ENCODE measurements at regions of chr3 and their contacts with region 1.

Region 1: GRCh38 chr3:124995460-124995994 is 60.3 kb downstream of the HEG1 start:
- DNase-seq: peak; percentile 20
- ATAC-seq: peak; percentile 96
- H3K4me3 ChIP-seq: no peak overlapping the region
- H3K27ac ChIP-seq: peak overlapping the region; percentile 38
- H3K4me1 ChIP-seq: peaks cover 5% of the 10 kb centered on the region
- H3K27me3 ChIP-seq: no peaks in the 10 kb centered on the region
- CTCF ChIP-seq: peak; percentile 66 to 92 (median 75); a peak in 4 of 6 replicates
- EP300 ChIP-seq: no peak
- POLR2A ChIP-seq: no peak
- RAD21 ChIP-seq: peak; percentile 91

Region 2: GRCh38 chr3:124688581-124689454 is 306.7 kb before region 1 on chr3:
- CTCF ChIA-PET with region 1: no interaction called
- POLR2A ChIA-PET with region 1: no interaction called
- RAD21 ChIA-PET with region 1: no interaction called
- SMC1A ChIA-PET with region 1: no interaction called
- in situ Hi-C with region 1: no loop called
- intact Hi-C with region 1: no loop called
- DNase-seq: peak; percentile 30
- ATAC-seq: peak; percentile 94
- H3K4me3 ChIP-seq: no peak overlapping the region
- H3K27ac ChIP-seq: no peak overlapping the region
- H3K4me1 ChIP-seq: no peaks in the 10 kb centered on the region
- H3K27me3 ChIP-seq: no peaks in the 10 kb centered on the region
- CTCF ChIP-seq: peak; percentile 75 to 95 (median 79); a peak in 5 of 6 replicates
- EP300 ChIP-seq: no peak
- POLR2A ChIP-seq: no peak
- RAD21 ChIP-seq: peak; percentile 91

Region 3: DNA sequence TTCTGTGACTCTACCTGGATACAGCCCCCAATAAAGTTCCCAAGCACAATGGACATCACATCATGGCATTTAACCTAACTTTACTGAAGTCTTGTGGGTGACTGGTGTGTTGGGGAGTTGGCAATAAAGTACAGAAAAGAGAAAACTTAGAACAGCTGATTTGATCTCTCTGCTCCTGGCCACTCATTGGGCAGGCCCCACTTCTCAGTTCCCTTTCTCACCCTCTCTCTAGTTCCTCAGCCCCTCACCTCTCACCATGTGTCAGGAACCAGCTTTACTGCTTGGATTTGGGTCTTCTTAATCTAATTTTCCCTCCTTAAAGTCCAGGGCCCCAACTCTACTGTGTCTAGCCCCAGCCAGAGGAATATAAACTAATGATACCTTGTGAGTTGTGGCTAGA is 60.3 kb before region 1 on chr3:
- CTCF ChIA-PET with region 1: interaction called, 10 read pairs
- POLR2A ChIA-PET with region 1: no interaction called
- RAD21 ChIA-PET with region 1: interaction called, 7 read pairs
- SMC1A ChIA-PET with region 1: interaction called, 19 read pairs
- in situ Hi-C with region 1: no loop called
- intact Hi-C with region 1: no loop called
- DNase-seq: no peak
- ATAC-seq: peak; percentile 89
- H3K4me3 ChIP-seq: no peak overlapping the region
- H3K27ac ChIP-seq: no peak overlapping the region
- H3K4me1 ChIP-seq: no peaks in the 10 kb centered on the region
- H3K27me3 ChIP-seq: no peaks in the 10 kb centered on the region; a peak in 1 of 4 replicates
- CTCF ChIP-seq: no peak
- EP300 ChIP-seq: no peak
- POLR2A ChIP-seq: no peak
- RAD21 ChIP-seq: no peak

Region 4: DNA sequence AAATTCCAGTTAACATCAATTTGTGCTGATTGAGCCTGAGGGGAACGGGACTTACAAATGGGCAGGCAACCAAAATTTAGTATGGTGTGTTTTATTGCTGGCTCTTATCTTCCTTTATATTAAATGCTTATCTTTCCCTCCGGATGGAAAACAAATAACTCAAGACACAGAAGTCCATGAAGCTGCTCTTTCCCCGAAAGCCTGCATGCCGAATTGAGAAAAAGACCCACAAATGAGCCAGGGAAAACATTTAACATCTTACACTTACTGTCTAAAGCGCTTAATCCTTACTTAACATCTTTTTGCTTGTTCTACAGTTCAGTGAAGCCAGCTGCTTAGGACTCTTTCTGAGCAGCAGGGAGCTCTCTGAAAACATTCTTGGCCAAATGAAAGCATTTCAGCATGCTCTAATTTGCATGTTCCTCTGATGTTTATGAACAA is 10.8 kb after region 1 on chr3:
- CTCF ChIA-PET with region 1: interaction called, 6 read pairs
- POLR2A ChIA-PET with region 1: no interaction called
- RAD21 ChIA-PET with region 1: interaction called, 3 read pairs
- SMC1A ChIA-PET with region 1: interaction called, 14 read pairs
- in situ Hi-C with region 1: no loop called
- intact Hi-C with region 1: no loop called
- DNase-seq: no peak
- ATAC-seq: no peak
- H3K4me3 ChIP-seq: no peak overlapping the region
- H3K27ac ChIP-seq: no peak overlapping the region
- H3K4me1 ChIP-seq: no peaks in the 10 kb centered on the region
- H3K27me3 ChIP-seq: no peaks in the 10 kb centered on the region
- CTCF ChIP-seq: no peak
- EP300 ChIP-seq: no peak
- POLR2A ChIP-seq: no peak
- RAD21 ChIP-seq: no peak

Region 5: DNA sequence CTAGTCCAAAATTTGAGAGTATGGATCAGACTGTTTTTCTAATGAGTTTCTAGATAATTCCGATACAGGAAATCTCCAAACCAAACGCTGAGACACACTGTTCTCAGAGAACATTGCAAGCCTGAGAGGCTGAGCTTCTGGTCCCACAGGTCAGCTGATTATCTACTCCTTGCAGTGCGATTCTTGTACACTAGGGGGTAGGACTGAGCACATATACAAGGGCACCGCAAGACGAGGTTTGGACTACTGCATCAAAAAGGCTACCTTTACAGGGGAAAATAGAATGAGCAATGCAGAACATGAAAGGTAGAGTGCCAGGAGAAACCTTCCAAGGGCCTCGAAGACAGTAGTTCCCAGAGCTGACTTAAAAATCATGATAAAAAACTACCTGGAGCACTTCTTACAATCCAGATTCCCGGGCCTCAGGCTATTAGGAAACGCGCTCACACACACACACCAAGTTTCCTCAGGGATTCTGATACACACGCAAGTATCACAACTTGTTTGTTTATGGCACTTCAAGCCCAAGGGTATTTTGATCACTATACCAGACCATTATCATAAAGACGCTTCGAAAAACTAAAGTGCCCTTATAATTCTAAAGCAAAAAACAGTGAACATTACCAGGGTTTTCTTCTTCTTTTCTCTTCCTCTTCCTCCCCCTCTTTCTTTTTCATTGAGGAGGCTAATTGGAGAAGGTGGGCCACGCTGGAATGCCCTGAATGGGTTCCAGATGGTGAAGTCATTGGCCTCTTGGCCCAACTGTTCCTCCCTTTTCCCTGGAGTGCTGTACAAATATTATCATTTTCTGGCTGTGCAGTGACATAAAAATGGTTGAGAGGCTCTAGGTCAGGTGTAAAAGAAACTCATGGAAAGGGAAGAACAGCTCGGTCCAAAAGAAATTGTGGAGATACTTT is 155.3 kb after region 1 on chr3:
- CTCF ChIA-PET with region 1: interaction called, 10 read pairs
- POLR2A ChIA-PET with region 1: no interaction called
- RAD21 ChIA-PET with region 1: no interaction called
- SMC1A ChIA-PET with region 1: interaction called, 3 read pairs
- in situ Hi-C with region 1: no loop called
- intact Hi-C with region 1: loop called (anchors 1 kb)
- DNase-seq: no peak
- ATAC-seq: peak; percentile 57
- H3K4me3 ChIP-seq: no peak overlapping the region
- H3K27ac ChIP-seq: no peak overlapping the region
- H3K4me1 ChIP-seq: peaks cover 55% of the 10 kb centered on the region
- H3K27me3 ChIP-seq: no peaks in the 10 kb centered on the region
- CTCF ChIP-seq: peak; percentile 49 to 80 (median 70)
- EP300 ChIP-seq: no peak
- POLR2A ChIP-seq: no peak
- RAD21 ChIP-seq: peak; percentile 70

Region 6: GRCh38 chr3:125165189-125165947 is 169.8 kb after region 1 on chr3:
- CTCF ChIA-PET with region 1: interaction called, 12 read pairs
- POLR2A ChIA-PET with region 1: no interaction called
- RAD21 ChIA-PET with region 1: interaction called, 5 read pairs
- SMC1A ChIA-PET with region 1: interaction called, 15 read pairs
- in situ Hi-C with region 1: no loop called
- intact Hi-C with region 1: no loop called
- DNase-seq: no peak
- ATAC-seq: peak; percentile 78
- H3K4me3 ChIP-seq: no peak overlapping the region
- H3K27ac ChIP-seq: no peak overlapping the region
- H3K4me1 ChIP-seq: peaks cover 17% of the 10 kb centered on the region
- H3K27me3 ChIP-seq: no peaks in the 10 kb centered on the region
- CTCF ChIP-seq: peak; percentile 24 to 50 (median 45); a peak in 5 of 6 replicates
- EP300 ChIP-seq: no peak
- POLR2A ChIP-seq: no peak
- RAD21 ChIP-seq: peak; percentile 57

Region 7: GRCh38 chr3:125334675-125335560 is 339.4 kb after region 1 on chr3:
- CTCF ChIA-PET with region 1: no interaction called
- POLR2A ChIA-PET with region 1: no interaction called
- RAD21 ChIA-PET with region 1: no interaction called
- SMC1A ChIA-PET with region 1: no interaction called
- in situ Hi-C with region 1: no loop called
- intact Hi-C with region 1: no loop called
- DNase-seq: no peak
- ATAC-seq: no peak
- H3K4me3 ChIP-seq: no peak overlapping the region
- H3K27ac ChIP-seq: no peak overlapping the region
- H3K4me1 ChIP-seq: no peaks in the 10 kb centered on the region
- H3K27me3 ChIP-seq: no peaks in the 10 kb centered on the region
- CTCF ChIP-seq: no peak
- EP300 ChIP-seq: no peak
- POLR2A ChIP-seq: no peak
- RAD21 ChIP-seq: no peak

Region 8: GRCh38 chr3:125431912-125432790 is 436.6 kb after region 1 on chr3:
- CTCF ChIA-PET with region 1: interaction called, 82 read pairs
- POLR2A ChIA-PET with region 1: interaction called, 3 read pairs
- RAD21 ChIA-PET with region 1: interaction called, 30 read pairs
- SMC1A ChIA-PET with region 1: interaction called, 38 read pairs
- in situ Hi-C with region 1: loop called (anchors 25 kb)
- intact Hi-C with region 1: no loop called
- DNase-seq: no peak
- ATAC-seq: no peak
- H3K4me3 ChIP-seq: no peak overlapping the region
- H3K27ac ChIP-seq: no peak overlapping the region; the same call in 1 of the 2 replicates
- H3K4me1 ChIP-seq: peaks cover 25% of the 10 kb centered on the region
- H3K27me3 ChIP-seq: no peaks in the 10 kb centered on the region
- CTCF ChIP-seq: no peak
- EP300 ChIP-seq: no peak
- POLR2A ChIP-seq: no peak
- RAD21 ChIP-seq: no peak

Region 9: GRCh38 chr3:125437631-125438435 is 442.3 kb after region 1 on chr3:
- CTCF ChIA-PET with region 1: interaction called, 82 read pairs
- POLR2A ChIA-PET with region 1: interaction called, 3 read pairs
- RAD21 ChIA-PET with region 1: interaction called, 30 read pairs
- SMC1A ChIA-PET with region 1: interaction called, 38 read pairs
- in situ Hi-C with region 1: loop called (anchors 25 kb)
- intact Hi-C with region 1: loop called (anchors 1 kb)
- DNase-seq: no peak
- ATAC-seq: peak; percentile 45
- H3K4me3 ChIP-seq: no peak overlapping the region
- H3K27ac ChIP-seq: no peak overlapping the region
- H3K4me1 ChIP-seq: peaks cover 19% of the 10 kb centered on the region
- H3K27me3 ChIP-seq: no peaks in the 10 kb centered on the region
- CTCF ChIP-seq: peak; percentile 92 to 96 (median 92)
- EP300 ChIP-seq: no peak
- POLR2A ChIP-seq: no peak
- RAD21 ChIP-seq: peak; percentile 97